ENCODE measurements at regions of chr7 and their contacts with region 1.

Region 1: DNA sequence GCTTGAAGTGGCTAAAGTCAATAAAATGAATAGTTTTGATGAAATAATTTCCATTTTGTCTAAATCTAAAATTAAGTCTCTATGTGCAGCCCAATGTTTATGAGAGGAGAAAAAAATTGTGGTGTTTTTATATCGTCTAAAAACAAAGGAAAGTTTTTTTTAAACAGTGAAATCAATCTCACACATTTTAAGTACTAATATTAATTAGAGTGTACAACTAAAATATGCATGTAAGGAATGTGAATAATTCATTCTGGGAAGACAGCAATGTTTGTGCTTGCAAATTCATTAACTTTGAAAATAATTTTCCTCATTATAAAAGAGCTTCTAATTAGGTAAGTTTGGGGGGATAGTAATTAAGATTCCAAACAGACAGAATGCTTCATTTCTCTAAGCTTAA is at the start of gene NPVF:
- DNase-seq: no peak
- H3K4me3 ChIP-seq: no peak within 1 kb of the TSS
- H3K27me3 ChIP-seq: no peaks in the 10 kb centered on the region; the same call in none of the 2 replicates
- CTCF ChIP-seq: no peak
- polyA plus RNA-seq, gene NPVF: not detected in 2 replicates

Region 2: DNA sequence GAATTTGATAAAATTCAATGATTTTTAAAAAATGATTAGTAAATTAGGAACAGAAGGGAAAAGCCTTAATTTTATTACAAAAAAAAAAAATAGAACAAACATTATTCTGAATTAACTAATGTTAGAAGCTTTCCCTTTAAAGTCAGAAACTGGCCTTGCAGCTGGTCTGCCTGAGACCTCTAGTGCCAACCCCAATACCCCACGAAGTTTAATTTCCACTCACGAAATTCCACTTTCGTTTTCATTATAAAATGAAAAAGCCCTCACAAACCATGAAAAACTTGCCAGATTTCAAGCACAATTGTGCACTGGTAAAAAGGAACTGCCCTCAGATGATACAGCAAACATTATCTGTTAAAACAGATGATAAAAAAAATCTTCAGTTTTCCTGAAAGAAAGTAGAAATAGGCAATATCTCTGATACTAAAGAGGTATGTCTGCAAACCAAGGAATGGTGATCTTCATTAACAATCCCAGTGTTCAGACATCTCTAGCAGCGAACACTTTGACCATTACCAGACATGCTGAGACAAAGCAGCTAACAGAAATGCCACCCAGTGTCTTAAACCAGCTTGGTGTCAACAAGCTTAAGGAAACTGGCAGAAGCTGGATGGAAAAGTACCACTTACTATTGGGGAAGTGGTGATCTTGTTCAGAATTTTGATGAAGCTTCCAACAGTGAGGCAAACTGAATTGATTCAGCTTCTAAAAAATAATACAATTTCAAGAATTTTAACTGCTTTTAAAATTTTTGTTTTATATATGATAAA is 574.9 kb before region 1 on chr7:
- CTCF ChIA-PET with region 1: no interaction called
- POLR2A ChIA-PET with region 1: no interaction called
- DNase-seq: no peak
- H3K4me3 ChIP-seq: no peak overlapping the region
- H3K27me3 ChIP-seq: no peaks in the 10 kb centered on the region
- CTCF ChIP-seq: no peak

Region 3: DNA sequence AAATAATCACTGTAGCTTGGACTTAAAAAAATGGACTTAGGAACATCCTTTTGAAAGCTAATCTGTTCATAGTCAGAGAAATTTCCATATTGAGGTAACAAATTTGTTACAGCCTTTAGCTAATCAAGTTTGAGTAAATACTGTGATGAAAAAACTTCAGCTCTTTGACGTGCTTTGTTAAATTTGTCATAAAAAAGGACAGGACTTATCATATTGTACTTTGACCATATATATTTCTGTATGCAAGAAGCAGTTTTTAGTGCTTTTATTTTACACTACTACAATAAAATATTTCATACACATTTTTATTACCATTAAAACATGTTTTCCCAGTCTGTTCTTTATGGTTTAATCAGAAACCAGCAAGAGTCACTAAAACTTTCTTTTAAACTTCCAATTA is 88.8 kb before region 1 on chr7:
- CTCF ChIA-PET with region 1: no interaction called
- POLR2A ChIA-PET with region 1: no interaction called
- DNase-seq: no peak
- H3K4me3 ChIP-seq: no peak overlapping the region
- H3K27me3 ChIP-seq: no peaks in the 10 kb centered on the region
- CTCF ChIP-seq: no peak

Region 4: GRCh38 chr7:25216837-25217236 is 11.5 kb before region 1 on chr7:
- CTCF ChIA-PET with region 1: interaction called, 13 read pairs
- POLR2A ChIA-PET with region 1: no interaction called
- DNase-seq: peak; percentile 2
- H3K4me3 ChIP-seq: no peak overlapping the region
- H3K27me3 ChIP-seq: no peaks in the 10 kb centered on the region; the same call in 1 of the 2 replicates
- CTCF ChIP-seq: peak; percentile 69

Measured in BJ (cell line).